ENCODE measurements at regions of chr14 and their contacts with region 1.

Region 1: GRCh38 chr14:90256354-90257131 is at the start of gene PSMC1:
- DNase-seq: peak; percentile 95
- H3K4me3 ChIP-seq: peak within 1 kb of the TSS; percentile 50 to 95 (median 77)
- H3K27ac ChIP-seq: peak within 1 kb of the TSS; percentile 86
- H3K4me1 ChIP-seq: peaks cover 5% of the 10 kb centered on the region
- H3K27me3 ChIP-seq: peaks cover 0 to 2% of the 10 kb centered on the region in 2 experiments
- CTCF ChIP-seq: no peak
- POLR2A ChIP-seq: peak; percentile 84
- total RNA-seq, gene PSMC1: 129 and 132 TPM in 2 replicates

Region 2: DNA sequence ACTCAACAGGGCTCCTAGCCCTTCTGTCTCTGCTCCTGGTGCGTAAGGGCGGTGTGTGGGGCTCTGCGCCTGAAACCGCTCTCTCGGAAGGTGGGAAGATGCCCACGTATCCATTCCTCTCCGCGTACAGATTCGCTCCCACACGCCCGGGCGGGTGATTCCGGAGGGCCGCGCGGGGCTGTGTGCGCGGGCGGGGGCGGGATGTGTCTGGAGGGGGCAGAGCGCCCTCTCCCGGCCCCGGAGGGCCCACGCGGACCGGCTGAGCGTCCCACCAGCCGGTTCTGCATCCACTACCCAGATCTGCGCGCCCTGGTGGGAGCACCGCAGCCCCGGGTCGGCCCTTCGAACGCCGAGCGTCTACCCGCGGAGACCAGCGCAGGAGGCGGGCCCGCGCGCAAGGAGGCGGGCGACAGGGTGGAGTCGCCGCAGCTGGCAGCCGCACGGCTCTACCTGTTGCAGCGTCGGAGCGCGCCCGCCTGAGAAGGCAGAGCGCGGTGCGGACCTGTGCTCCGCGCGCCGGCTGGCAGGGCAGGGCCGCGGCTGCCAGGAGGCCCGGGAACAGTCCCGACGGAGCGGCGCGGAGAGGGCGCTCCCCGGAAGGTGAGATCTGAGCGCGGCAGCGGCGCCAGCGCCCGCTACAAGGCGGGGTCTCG is 196.1 kb before region 1 on chr14:
- CTCF ChIA-PET with region 1: no interaction called
- POLR2A ChIA-PET with region 1: no interaction called
- dilution Hi-C with region 1: no loop called
- intact Hi-C with region 1: loop called (anchors 5 kb)
- DNase-seq: peak; percentile 54
- H3K4me3 ChIP-seq: peak overlapping the region; percentile 20 to 53 (median 46)
- H3K27ac ChIP-seq: no peak overlapping the region
- H3K4me1 ChIP-seq: peaks cover 27% of the 10 kb centered on the region
- H3K27me3 ChIP-seq: peaks cover 51 to 75% of the 10 kb centered on the region in 2 experiments
- CTCF ChIP-seq: peak; percentile 52 to 72
- POLR2A ChIP-seq: no peak

Region 3: DNA sequence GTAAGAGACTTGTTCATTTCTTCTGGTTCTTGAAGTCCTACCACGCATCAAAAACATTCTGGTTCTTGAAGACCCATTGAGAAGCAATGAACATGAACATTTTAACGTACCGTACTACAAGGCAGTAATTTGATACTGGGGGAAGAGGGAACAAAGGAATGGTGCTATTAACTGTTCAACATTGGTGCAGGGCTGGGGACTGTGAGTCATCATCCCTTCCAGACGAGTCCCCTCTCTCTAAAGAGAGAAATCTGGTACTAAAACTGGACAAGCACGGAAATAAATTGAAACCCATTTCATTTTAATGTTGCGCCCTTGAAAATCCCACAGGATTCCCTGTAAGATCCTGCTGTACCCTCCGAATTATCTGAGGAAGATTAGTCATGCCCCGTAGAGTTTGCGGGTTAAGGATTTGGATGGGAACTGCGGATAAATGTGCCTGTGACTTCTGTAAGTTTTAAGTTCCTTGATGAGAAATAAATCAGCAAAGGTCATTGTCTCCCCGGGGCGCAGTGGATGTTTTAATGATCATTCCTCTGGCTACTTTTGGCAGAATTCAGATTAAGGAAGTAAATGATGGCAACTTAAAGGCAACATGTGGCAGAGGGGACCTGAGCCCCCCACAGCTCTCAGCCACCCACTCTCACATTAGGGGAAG is 116.1 kb before region 1 on chr14:
- CTCF ChIA-PET with region 1: no interaction called
- POLR2A ChIA-PET with region 1: no interaction called
- dilution Hi-C with region 1: no loop called
- intact Hi-C with region 1: loop called (anchors 1 kb)
- DNase-seq: peak; percentile 62
- H3K4me3 ChIP-seq: no peak overlapping the region
- H3K27ac ChIP-seq: peak overlapping the region; percentile 93
- H3K4me1 ChIP-seq: peaks cover 34% of the 10 kb centered on the region
- H3K27me3 ChIP-seq: peaks cover 2 to 5% of the 10 kb centered on the region in 2 experiments
- CTCF ChIP-seq: no peak
- POLR2A ChIP-seq: no peak